ENCODE measurements at regions of chr3 and their contacts with region 1.

Region 1: DNA sequence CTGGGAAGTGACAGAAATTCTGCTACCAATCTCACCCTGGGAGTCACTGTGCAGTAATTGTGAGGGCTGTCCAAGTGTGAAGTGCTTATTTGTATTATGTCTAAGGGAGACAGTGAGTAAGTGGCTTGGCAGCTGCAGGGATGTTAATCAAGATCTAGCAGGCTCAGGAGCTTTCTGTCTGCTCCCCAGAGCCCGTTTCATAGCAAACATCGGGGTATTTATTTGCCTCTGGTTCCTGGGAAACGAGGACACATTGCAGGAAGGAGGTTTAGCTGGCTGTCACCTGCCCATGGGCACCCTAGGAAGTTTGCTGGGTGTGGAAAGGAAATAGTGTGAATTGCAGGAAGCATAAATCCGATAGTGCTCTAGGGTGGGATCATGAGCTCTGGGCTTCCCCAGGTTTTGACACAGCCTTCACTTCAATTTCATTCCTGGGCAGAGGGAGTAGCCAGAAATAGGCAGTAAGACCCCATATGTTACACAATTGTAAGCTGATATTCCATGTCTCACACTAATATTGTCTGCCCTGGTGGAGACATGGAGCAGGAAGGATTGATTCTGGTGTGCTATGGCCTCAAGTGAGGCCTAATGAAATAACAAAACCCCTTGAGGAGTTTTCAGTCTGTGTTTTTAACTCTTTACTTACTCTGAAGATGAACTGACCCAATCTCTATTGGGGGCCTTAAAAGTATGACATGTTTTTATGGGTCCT is 74.1 kb upstream of the MITF start:
- DNase-seq: no peak
- H3K4me3 ChIP-seq: no peak overlapping the region
- H3K27ac ChIP-seq: no peak overlapping the region
- H3K4me1 ChIP-seq: no peaks in the 10 kb centered on the region
- H3K27me3 ChIP-seq: no peaks in the 10 kb centered on the region
- CTCF ChIP-seq: no peak
- POLR2A ChIP-seq: no peak

Region 2: DNA sequence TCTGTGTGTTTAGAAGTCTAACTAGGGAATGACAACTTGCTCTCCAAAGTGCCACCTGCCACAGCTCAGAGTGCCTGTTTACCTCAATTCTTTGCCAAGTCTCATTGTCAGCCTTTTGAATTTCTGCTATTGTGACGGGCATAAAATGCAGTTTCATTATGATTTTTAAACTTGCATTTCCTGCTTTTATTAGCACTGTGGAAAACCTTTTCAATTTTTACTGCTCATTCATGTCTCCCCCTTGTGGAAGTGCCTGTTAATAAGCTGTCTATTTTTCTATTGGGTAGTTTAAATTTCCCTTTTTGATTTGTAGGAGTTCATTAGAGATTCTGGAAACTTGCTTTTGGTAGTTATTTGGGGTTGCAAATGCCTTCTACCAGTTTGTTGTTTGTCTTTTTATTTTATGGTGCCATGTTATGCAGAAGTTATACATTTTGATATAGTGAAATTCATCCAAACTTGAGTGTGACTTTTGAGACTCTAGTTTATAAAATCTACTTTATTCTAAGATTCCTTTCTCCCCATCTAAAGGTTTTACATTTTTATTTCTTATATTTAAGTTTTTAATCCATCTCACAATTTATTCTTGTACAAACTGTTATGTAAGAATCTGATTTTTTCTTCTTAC is 225.4 kb before region 1 on chr3:
- intact Hi-C with region 1: loop called (anchors 10 kb)
- DNase-seq: no peak
- H3K4me3 ChIP-seq: no peak overlapping the region
- H3K27ac ChIP-seq: no peak overlapping the region
- H3K4me1 ChIP-seq: no peaks in the 10 kb centered on the region
- H3K27me3 ChIP-seq: no peaks in the 10 kb centered on the region
- CTCF ChIP-seq: peak; percentile 22 to 57 (median 51)
- POLR2A ChIP-seq: no peak

Region 3: GRCh38 chr3:69568458-69568857 is 96.7 kb before region 1 on chr3:
- intact Hi-C with region 1: no loop called
- DNase-seq: no peak
- H3K4me3 ChIP-seq: no peak overlapping the region
- H3K27ac ChIP-seq: no peak overlapping the region
- H3K4me1 ChIP-seq: no peaks in the 10 kb centered on the region
- H3K27me3 ChIP-seq: no peaks in the 10 kb centered on the region
- CTCF ChIP-seq: no peak
- POLR2A ChIP-seq: no peak